ENCODE measurements at regions of chr1 and their contacts with region 1.

Region 1: DNA sequence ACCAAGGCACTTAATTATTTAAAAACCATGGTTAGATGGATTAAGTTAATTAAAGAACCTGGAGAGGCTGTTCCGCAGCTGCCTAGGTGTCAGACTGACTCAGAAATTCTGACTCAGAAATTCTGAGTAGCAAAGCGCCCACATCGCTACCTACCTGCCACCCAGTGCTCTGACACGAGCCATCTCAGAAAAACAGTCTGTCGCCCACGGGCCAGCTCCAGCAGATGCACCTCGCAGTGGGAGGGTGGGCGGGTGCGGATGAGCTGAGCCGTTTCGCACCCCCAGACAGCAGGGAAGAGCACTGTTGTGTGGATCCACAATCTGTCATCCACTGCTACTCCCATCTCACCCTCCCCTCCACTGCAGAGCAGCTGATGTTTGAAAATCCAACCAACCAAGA is 13.5 kb downstream of the KCNK1 start:
- DNase-seq: peak; percentile 80
- H3K4me3 Mint-ChIP-seq: no peak overlapping the region
- H3K27ac Mint-ChIP-seq: peak overlapping the region; percentile 81
- H3K4me1 Mint-ChIP-seq: peaks cover 12% of the 10 kb centered on the region
- H3K27me3 Mint-ChIP-seq: peaks cover 8% of the 10 kb centered on the region

Region 2: GRCh38 chr1:233269656-233270055 is 357.7 kb before region 1 on chr1:
- CTCF ChIA-PET with region 1: no interaction called
- POLR2A ChIA-PET with region 1: no interaction called
- intact Hi-C with region 1: no loop called
- DNase-seq: no peak
- H3K4me3 Mint-ChIP-seq: no peak overlapping the region
- H3K27ac Mint-ChIP-seq: no peak overlapping the region
- H3K4me1 Mint-ChIP-seq: peaks cover 42% of the 10 kb centered on the region
- H3K27me3 Mint-ChIP-seq: no peaks in the 10 kb centered on the region

Region 3: DNA sequence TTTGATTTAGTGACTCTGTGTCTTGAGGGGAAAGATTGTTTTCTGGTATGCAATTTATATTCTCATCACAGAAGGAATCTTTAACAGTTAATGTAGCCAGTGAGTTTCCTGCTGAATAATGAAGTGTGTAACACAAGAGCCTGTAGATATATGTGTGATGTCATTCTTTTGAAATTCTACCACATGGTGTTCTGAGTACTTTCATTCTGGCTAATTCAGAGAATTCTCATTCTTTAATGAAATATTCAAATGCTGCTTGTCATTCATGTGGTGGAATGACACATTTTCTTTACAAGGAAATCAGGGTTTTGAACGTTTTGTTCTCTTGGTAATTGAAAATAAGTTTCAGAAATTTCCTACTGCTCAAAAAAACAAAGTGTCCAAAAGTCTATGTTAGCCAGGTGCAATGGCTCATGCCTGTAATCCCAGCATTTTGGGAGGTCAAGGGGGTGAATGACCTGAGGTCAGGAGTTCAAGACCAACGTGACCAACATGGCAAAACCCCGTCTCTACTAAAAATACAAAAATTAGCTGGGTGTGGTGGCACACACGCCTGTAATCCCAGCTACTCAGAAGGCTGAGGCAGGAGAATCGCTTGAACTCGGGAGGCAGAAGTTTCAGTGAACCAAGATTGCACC is 220.3 kb before region 1 on chr1:
- CTCF ChIA-PET with region 1: no interaction called
- POLR2A ChIA-PET with region 1: no interaction called
- intact Hi-C with region 1: loop called (anchors 1 kb)
- DNase-seq: peak; percentile 23
- H3K4me3 Mint-ChIP-seq: no peak overlapping the region
- H3K27ac Mint-ChIP-seq: peak overlapping the region; percentile 81
- H3K4me1 Mint-ChIP-seq: peaks cover 26% of the 10 kb centered on the region
- H3K27me3 Mint-ChIP-seq: peaks cover 18% of the 10 kb centered on the region

Region 4: GRCh38 chr1:233613252-233614174 is 13.9 kb before region 1 on chr1 and contains the start of gene KCNK1:
- CTCF ChIA-PET with region 1: no interaction called
- POLR2A ChIA-PET with region 1: interaction called, 4 read pairs
- intact Hi-C with region 1: loop called (anchors 1 kb)
- DNase-seq: peak; percentile 50
- H3K4me3 Mint-ChIP-seq: peak within 1 kb of the TSS; percentile 78
- H3K27ac Mint-ChIP-seq: peak within 1 kb of the TSS; percentile 66
- H3K4me1 Mint-ChIP-seq: peaks cover 29% of the 10 kb centered on the region
- H3K27me3 Mint-ChIP-seq: peaks cover 64% of the 10 kb centered on the region
- total RNA-seq, gene KCNK1: 5.0 to 5.2 TPM

Region 5: GRCh38 chr1:233668725-233669294 is 41.4 kb after region 1 on chr1:
- CTCF ChIA-PET with region 1: interaction called, 3 read pairs
- POLR2A ChIA-PET with region 1: no interaction called
- intact Hi-C with region 1: loop called (anchors 5 kb)
- DNase-seq: peak; percentile 29
- H3K4me3 Mint-ChIP-seq: no peak overlapping the region
- H3K27ac Mint-ChIP-seq: no peak overlapping the region
- H3K4me1 Mint-ChIP-seq: peaks cover 5% of the 10 kb centered on the region
- H3K27me3 Mint-ChIP-seq: peaks cover 16% of the 10 kb centered on the region

Region 6: DNA sequence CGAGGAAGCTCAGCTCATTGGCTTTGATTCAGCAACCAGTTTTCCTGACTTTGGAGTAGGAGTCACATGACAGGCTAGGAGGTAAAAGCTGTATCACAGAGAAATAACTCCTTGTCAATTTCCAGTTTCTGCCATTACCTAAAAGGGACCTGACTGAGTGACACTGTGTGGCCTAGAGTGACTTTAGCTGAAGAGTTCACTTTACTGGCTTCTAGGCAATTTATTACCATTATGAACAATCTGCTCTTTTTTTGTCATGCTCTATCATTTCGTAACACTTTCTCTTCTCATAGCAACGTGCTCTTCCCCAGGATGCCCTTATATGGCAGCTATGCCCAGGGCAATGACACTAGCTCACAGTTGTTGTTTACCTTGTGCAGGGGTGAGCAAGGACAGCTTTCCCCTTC is 93.8 kb after region 1 on chr1:
- CTCF ChIA-PET with region 1: no interaction called
- POLR2A ChIA-PET with region 1: no interaction called
- intact Hi-C with region 1: loop called (anchors 1 kb)
- DNase-seq: no peak
- H3K4me3 Mint-ChIP-seq: no peak overlapping the region
- H3K27ac Mint-ChIP-seq: no peak overlapping the region
- H3K4me1 Mint-ChIP-seq: no peaks in the 10 kb centered on the region
- H3K27me3 Mint-ChIP-seq: peaks cover 17% of the 10 kb centered on the region

Region 7: GRCh38 chr1:234188454-234188792 is 561.0 kb after region 1 on chr1:
- CTCF ChIA-PET with region 1: no interaction called
- POLR2A ChIA-PET with region 1: no interaction called
- intact Hi-C with region 1: no loop called
- DNase-seq: peak; percentile 34
- H3K4me3 Mint-ChIP-seq: no peak overlapping the region
- H3K27ac Mint-ChIP-seq: no peak overlapping the region
- H3K4me1 Mint-ChIP-seq: peaks cover 6% of the 10 kb centered on the region
- H3K27me3 Mint-ChIP-seq: peaks cover 56% of the 10 kb centered on the region

Measured in activated CD4-positive, alpha-beta memory T cell treated with anti-CD3 and anti-CD28 coated beads for 36 hours (primary cell).